ENCODE measurements at regions of chr1 and their contacts with region 1.

Region 1: DNA sequence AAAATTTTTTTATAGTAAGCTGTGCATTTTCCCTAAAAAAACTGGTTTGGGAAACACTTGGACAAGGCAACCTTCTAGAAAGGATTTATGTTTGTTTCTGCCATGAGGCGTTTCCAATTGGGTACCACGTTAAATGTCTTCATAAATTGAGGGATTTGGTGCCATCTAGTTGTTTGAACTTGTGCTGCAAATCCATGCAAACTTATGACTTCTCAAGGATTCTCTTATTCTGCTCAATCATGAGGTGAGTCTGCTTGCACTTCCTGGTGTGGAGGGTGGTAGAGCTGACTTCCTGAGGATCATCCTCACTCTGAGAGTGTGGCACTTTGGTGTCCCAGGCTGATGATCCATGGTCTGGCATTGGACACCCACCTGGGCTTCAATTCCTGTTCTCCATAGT is 123.3 kb downstream of the PCNX2 start:
- DNase-seq: peak; percentile 67
- H3K4me3 ChIP-seq: no peak overlapping the region
- H3K27ac ChIP-seq: no peak overlapping the region
- H3K4me1 ChIP-seq: no peaks in the 10 kb centered on the region
- H3K27me3 ChIP-seq: no peaks in the 10 kb centered on the region
- CTCF ChIP-seq: peak; percentile 26 to 42
- POLR2A ChIP-seq: no peak

Region 2: DNA sequence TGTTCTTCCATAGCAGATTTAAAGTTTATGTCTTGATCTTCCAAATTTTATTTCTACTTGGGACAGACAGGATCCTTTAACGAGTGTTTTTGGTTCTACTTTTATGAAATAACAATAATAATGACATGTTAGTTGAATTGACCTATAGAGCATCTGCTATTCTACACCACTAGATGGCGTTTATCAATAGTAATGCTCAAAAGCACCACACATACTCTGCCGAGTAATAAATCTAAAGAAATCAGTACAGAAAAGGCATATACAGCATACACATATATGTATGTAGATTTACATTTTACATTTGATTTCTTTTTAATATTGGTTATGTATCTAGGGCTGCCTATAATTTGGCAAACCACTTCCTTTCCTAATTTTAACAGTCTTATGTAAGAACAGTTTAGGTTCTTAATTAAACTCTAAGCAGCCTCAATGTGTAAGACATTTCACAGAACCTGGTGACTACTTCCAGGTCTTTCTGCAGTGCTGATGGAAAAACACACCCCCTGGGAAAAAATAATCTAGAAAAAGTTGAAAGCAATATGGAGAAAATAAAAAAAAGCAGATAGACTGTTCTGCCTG is 536.4 kb before region 1 on chr1:
- CTCF ChIA-PET with region 1: interaction called, 6 read pairs
- POLR2A ChIA-PET with region 1: no interaction called
- dilution Hi-C with region 1: no loop called
- intact Hi-C with region 1: loop called (anchors 1 kb)
- DNase-seq: peak; percentile 59
- H3K4me3 ChIP-seq: no peak overlapping the region
- H3K27ac ChIP-seq: no peak overlapping the region
- H3K4me1 ChIP-seq: peaks cover 4% of the 10 kb centered on the region
- H3K27me3 ChIP-seq: no peaks in the 10 kb centered on the region
- CTCF ChIP-seq: peak; percentile 52 to 53
- POLR2A ChIP-seq: no peak

Region 3: GRCh38 chr1:232805269-232806185 is 366.7 kb before region 1 on chr1 and contains the start of gene MAP10:
- CTCF ChIA-PET with region 1: no interaction called
- POLR2A ChIA-PET with region 1: no interaction called
- dilution Hi-C with region 1: no loop called
- intact Hi-C with region 1: loop called (anchors 10 kb)
- DNase-seq: peak; percentile 77
- H3K4me3 ChIP-seq: peak within 1 kb of the TSS; percentile 62 to 80 (median 72)
- H3K27ac ChIP-seq: peak within 1 kb of the TSS; percentile 32
- H3K4me1 ChIP-seq: peaks cover 6% of the 10 kb centered on the region
- H3K27me3 ChIP-seq: no peaks in the 10 kb centered on the region
- CTCF ChIP-seq: no peak
- POLR2A ChIP-seq: peak; percentile 51
- total RNA-seq, gene MAP10: 1.9 and 2.0 TPM in 2 replicates

Region 4: GRCh38 chr1:233025157-233025915 is 146.9 kb before region 1 on chr1:
- CTCF ChIA-PET with region 1: no interaction called
- POLR2A ChIA-PET with region 1: no interaction called
- dilution Hi-C with region 1: no loop called
- intact Hi-C with region 1: loop called (anchors 5 kb)
- DNase-seq: peak; percentile 68
- H3K4me3 ChIP-seq: no peak overlapping the region
- H3K27ac ChIP-seq: no peak overlapping the region
- H3K4me1 ChIP-seq: peaks cover 6% of the 10 kb centered on the region
- H3K27me3 ChIP-seq: no peaks in the 10 kb centered on the region
- CTCF ChIP-seq: peak; percentile 31 to 69
- POLR2A ChIP-seq: no peak

Region 5: DNA sequence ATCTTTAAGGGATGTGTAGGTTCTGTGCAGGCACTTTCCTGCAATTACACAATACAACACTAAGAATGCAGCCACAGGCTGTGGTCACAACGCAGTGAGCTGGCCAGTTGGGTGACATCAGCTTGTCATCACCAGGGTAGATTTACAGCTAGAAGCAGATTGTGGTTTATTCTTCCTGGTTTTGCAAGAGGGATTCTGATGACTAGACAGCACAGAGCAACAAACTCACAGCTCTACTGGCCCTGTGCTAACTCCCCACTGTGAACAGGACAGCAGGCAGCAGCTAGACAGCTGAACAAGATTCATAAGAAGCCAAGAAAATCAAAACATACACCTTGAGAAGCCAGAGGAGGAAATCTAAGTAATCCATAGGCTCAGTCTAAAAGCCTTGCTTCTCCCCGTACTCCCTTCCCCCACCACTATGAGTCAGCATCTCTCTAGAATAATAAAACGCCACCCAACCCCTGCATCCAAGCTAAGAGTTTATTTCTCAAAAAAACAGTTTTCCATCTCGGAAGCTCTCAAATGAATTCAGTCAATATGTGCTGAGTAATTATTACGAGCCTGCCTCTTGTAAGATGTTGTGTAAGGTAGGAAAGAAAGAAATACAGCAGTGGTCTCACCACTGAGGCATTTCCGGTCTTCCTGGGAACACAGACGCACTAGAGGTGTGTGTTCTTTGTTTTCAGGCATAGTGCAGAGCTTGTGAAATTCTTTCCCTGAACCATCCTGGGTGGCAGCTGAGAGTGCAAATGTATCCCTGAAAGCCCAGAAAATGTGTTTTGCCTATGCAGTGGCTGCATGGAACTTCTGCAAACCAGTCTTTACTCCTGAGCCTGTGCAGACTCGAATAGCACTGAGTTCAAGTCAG is 59.0 kb before region 1 on chr1:
- CTCF ChIA-PET with region 1: interaction called, 3 read pairs
- POLR2A ChIA-PET with region 1: no interaction called
- dilution Hi-C with region 1: no loop called
- intact Hi-C with region 1: loop called (anchors 1 kb)
- DNase-seq: peak; percentile 89
- H3K4me3 ChIP-seq: peak overlapping the region in 1 of 3 experiments; percentile 6
- H3K27ac ChIP-seq: peak overlapping the region; percentile 89
- H3K4me1 ChIP-seq: peaks cover 32% of the 10 kb centered on the region
- H3K27me3 ChIP-seq: no peaks in the 10 kb centered on the region
- CTCF ChIP-seq: no peak
- POLR2A ChIP-seq: no peak

Measured in endothelial cell of umbilical vein (primary cell).